Ascending aorta (tissue), 2 donors: ENCODE measurements at regions of chr14 and their contacts with region 1.

Region 1: GRCh38 chr14:55731881-55732498 is 152.0 kb downstream of the KTN1 start:
- DNase-seq: no peak
- H3K4me3 ChIP-seq: no peak overlapping the region
- H3K27ac ChIP-seq: no peak overlapping the region
- H3K4me1 ChIP-seq: no peaks in the 10 kb centered on the region
- H3K27me3 ChIP-seq: no peaks in the 10 kb centered on the region
- CTCF ChIP-seq: peak; percentile 31 to 47 (median 31)

Region 2: GRCh38 chr14:55546212-55546874 is 185.6 kb before region 1 on chr14:
- intact Hi-C with region 1: no loop called
- DNase-seq: no peak
- H3K4me3 ChIP-seq: no peak overlapping the region
- H3K27ac ChIP-seq: no peak overlapping the region
- H3K4me1 ChIP-seq: no peaks in the 10 kb centered on the region
- H3K27me3 ChIP-seq: no peaks in the 10 kb centered on the region
- CTCF ChIP-seq: no peak

Region 3: DNA sequence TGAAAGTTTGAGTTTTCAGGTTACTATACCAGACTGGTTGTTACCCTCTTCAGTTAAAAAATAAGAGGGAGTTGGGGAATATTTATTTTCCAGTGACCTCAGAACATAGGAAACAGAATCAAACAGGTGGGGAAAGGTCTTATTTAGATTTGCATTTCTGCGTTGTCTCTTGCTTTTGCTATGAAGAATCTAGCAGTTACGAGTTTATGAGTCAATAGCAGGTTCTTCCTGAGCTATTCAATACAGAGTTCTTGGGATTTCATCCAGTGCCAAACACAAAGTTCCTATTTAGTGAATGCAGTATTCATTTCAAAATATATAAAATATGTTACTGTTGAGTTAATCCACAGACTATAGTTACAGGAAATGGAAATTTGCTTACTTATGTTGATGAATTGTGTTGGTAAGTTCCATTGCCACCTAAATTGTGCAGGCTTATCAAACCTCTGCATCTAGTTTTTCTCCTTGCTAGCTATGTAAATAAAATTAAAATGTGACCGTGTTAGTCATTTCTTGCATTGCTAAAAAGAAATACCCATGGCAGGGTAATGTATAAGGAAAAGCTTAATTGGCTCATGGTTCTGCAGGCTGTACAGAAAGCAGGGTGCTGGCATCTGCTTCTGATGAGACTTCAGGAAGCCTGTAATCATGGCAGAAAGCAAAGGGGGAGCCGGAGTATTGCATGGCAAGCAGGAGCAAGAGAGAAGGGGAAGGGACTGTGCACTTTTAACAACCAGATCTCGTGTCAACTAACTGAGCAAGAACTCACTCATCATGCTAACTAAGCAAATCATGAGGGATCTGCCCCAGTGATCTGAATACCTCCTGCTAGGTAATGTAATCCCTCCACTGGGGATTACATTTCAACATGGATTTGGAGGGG is 41.8 kb before region 1 on chr14:
- intact Hi-C with region 1: no loop called
- DNase-seq: no peak
- H3K4me3 ChIP-seq: no peak overlapping the region
- H3K27ac ChIP-seq: no peak overlapping the region
- H3K4me1 ChIP-seq: no peaks in the 10 kb centered on the region
- H3K27me3 ChIP-seq: no peaks in the 10 kb centered on the region
- CTCF ChIP-seq: no peak

Region 4: DNA sequence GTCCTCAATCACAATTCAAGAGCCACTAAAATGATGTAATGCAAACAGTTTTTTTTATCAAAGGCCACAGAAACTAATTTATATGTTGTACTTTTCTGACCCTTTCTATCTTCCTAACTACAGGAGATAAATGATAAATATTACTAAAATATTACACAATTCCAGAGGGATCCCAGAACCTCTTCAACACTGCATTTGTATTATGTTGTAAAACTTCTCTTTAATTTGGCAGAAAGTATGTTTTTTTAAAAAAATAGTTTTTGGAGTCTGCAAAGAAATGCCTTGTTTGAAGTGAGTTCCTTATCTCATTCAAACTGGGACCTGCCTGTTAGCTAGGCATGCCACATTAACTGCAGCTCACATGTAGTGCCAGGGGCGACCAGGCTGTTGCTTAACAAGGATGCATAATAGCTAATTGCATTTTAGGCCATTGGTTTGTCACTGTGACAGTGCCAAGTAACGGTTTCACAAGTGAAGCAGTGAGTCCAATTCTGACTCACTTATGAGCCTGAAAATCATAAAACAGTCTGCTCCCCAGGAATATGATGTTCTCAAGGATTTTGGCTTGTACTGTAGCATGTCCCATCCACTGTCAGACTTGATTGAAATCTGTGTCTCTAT is 114.9 kb after region 1 on chr14:
- intact Hi-C with region 1: loop called (anchors 10 kb)
- DNase-seq: peak in 1 of 2 donors; percentile 72
- H3K4me3 ChIP-seq: no peak overlapping the region
- H3K27ac ChIP-seq: no peak overlapping the region
- H3K4me1 ChIP-seq: peaks cover 0 to 9% of the 10 kb centered on the region in 2 donors
- H3K27me3 ChIP-seq: no peaks in the 10 kb centered on the region
- CTCF ChIP-seq: no peak

Region 5: DNA sequence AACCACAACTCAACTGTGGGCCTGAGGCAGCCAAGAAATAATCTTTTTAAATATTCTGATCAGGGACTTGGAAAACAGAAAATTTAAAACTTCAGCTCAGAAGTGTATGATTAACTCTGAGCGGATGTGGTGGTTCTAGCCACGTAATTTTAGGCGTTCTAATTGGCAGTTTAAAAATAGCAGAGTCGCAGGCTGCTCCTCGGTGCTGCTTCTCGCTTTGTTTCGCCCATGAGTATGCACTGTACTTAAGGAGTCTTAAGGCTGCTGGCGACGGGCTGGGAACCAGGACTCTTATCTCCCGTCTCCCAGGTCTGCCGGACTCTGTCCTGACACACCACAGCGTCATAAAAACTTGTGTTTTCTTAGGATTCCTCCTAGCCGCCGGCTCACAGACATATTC is 272.8 kb after region 1 on chr14:
- intact Hi-C with region 1: no loop called
- DNase-seq: peak in 1 of 2 donors; percentile 67
- H3K4me3 ChIP-seq: peak overlapping the region; percentile 20 to 35
- H3K27ac ChIP-seq: peak overlapping the region; percentile 45 to 68
- H3K4me1 ChIP-seq: peaks cover 0 to 7% of the 10 kb centered on the region in 2 donors
- H3K27me3 ChIP-seq: no peaks in the 10 kb centered on the region
- CTCF ChIP-seq: no peak